GM12878 (cell line): ENCODE measurements at regions of chr7 and their contacts with region 1.

Region 1: DNA sequence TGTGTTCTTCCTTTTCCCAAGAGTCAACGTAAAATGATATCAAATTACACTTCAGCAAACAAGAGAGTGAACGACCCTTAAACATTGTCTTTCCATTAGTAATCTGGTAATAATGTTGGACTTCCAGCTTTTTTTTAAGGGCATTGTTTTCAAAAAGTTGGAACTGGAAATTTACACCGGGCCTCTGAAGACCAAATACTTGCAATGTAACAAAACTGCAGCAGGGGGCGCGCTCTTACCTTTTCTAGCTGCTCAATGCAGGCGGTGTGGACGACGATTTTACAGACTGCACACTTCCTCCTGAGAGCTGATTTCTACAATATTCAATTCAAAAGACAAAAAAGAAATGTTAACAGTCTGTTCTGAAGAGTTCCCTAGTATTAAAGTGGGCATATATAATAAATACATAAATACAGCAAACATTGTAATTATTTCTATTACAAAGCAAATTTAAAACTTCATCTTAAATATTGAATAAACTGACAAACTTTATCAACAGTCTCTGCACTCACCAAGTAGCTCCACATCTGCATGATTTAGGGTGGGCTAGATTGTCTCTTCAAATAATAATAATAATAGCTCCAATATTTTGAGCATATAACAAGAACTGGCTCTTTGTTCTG is 190.4 kb downstream of the DGKI start:
- DNase-seq: peak; percentile 20
- ATAC-seq: peak; percentile 90
- H3K4me3 ChIP-seq: no peak overlapping the region
- H3K27ac ChIP-seq: no peak overlapping the region
- H3K4me1 ChIP-seq: no peaks in the 10 kb centered on the region
- H3K27me3 ChIP-seq: no peaks in the 10 kb centered on the region
- CTCF ChIP-seq: peak; percentile 74 to 86 (median 83)
- EP300 ChIP-seq: no peak
- POLR2A ChIP-seq: no peak
- RAD21 ChIP-seq: peak; percentile 96

Region 2: GRCh38 chr7:137670199-137671071 is 14.1 kb after region 1 on chr7:
- CTCF ChIA-PET with region 1: interaction called, 72 read pairs
- POLR2A ChIA-PET with region 1: interaction called, 23 read pairs
- RAD21 ChIA-PET with region 1: interaction called, 141 read pairs
- SMC1A ChIA-PET with region 1: interaction called, 140 read pairs
- in situ Hi-C with region 1: no loop called
- intact Hi-C with region 1: no loop called
- DNase-seq: peak; percentile 35
- ATAC-seq: peak; percentile 77
- H3K4me3 ChIP-seq: no peak overlapping the region
- H3K27ac ChIP-seq: no peak overlapping the region
- H3K4me1 ChIP-seq: 0 out of 2 replicates have a peak, but pooled peaks cover 2% of the 10 kb centered on the region
- H3K27me3 ChIP-seq: no peaks in the 10 kb centered on the region
- CTCF ChIP-seq: no peak
- EP300 ChIP-seq: no peak
- POLR2A ChIP-seq: no peak
- RAD21 ChIP-seq: peak; percentile 19; the same call in 1 of the 2 replicates

Region 3: DNA sequence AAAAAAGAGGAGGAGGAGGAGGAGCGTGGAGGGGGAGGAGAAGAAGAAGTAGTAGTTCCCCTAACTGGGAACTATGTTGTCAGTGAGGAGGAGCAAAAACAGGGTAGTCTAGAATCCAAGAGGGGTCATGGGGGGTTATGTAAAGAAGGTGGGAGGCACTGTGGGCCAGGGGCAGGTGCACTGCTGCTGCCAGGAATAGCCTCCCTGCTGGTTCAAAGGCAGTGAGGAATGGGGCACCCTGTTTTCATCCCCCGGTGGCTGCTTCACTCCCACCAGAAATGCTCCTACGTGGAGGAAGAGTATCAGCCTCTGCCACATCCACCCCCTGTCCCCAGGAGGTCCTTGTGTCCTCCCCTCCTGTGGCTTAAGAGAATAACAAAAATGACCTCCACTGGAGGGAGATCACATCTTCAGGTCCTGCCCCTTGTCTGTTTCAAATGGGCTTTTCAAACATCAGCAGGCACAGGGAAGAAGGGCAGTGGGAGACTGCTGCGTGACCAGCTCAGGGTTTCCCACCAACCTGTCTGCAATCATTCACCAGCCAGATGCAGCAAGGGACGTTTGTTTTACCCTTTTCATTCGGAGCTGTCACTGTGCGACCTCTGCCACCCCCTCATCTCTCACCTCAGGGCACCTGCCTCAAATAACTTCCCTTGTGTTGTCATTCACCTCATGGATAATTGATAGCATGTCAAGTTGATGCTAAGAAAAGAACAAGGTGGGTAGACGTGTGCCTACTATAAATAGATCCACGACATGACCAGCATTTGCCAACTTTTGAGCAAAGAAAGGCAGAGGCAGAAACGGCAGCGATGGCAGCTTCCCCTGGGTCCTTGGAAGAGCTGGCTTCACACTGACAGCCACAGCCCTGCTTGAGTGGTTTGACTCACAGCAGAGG is 97.9 kb after region 1 on chr7:
- CTCF ChIA-PET with region 1: interaction called, 20 read pairs
- POLR2A ChIA-PET with region 1: interaction called, 3 read pairs
- RAD21 ChIA-PET with region 1: interaction called, 48 read pairs
- SMC1A ChIA-PET with region 1: interaction called, 59 read pairs
- in situ Hi-C with region 1: no loop called
- intact Hi-C with region 1: no loop called
- DNase-seq: peak; percentile 27
- ATAC-seq: peak; percentile 72
- H3K4me3 ChIP-seq: no peak overlapping the region
- H3K27ac ChIP-seq: no peak overlapping the region
- H3K4me1 ChIP-seq: no peaks in the 10 kb centered on the region; the same call in 1 of the 2 replicates
- H3K27me3 ChIP-seq: no peaks in the 10 kb centered on the region; a peak in 1 of 4 replicates
- CTCF ChIP-seq: no peak
- EP300 ChIP-seq: peak; percentile 76 to 92; a peak in 2 of 4 replicates
- POLR2A ChIP-seq: no peak
- RAD21 ChIP-seq: no peak; the same call in 1 of the 2 replicates

Region 4: DNA sequence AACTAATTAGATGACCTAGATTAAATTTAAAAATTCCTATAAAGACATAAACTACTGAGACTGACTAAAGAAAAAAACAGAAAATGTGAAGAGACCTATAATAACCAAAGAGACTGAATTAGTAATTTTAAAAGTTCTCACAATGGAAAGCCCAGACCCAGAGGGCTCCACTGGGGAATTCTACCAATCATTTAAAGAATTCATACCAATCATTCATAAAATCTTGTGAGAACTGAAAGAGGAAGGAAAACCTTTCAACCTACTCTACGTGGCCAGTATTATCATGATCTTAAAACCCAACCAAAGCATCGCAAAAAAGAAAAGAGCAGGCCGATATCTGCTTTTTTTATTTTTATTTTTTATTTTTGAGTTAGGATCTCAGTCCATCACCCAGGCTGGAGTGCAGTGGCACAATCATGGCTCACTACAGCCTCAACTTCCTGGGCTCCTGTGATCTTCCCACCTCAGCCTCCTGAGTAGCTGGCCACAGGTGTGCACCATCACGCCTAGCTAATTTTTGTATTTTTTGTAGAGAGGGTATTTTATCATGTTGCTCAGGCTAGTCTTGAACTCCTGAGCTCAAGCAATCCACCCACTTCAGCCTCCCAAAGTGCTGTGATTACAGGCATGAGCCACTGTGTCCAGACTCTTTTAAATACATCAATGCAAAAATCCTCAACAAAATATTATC is 141.9 kb after region 1 on chr7:
- CTCF ChIA-PET with region 1: interaction called, 21 read pairs
- POLR2A ChIA-PET with region 1: no interaction called
- RAD21 ChIA-PET with region 1: interaction called, 13 read pairs
- SMC1A ChIA-PET with region 1: interaction called, 11 read pairs
- in situ Hi-C with region 1: no loop called
- intact Hi-C with region 1: no loop called
- DNase-seq: peak; percentile 59
- ATAC-seq: peak; percentile 96
- H3K4me3 ChIP-seq: no peak overlapping the region
- H3K27ac ChIP-seq: no peak overlapping the region; the same call in 1 of the 2 replicates
- H3K4me1 ChIP-seq: no peaks in the 10 kb centered on the region
- H3K27me3 ChIP-seq: no peaks in the 10 kb centered on the region
- CTCF ChIP-seq: no peak
- EP300 ChIP-seq: peak; percentile 48 to 84; a peak in 3 of 4 replicates
- POLR2A ChIP-seq: no peak
- RAD21 ChIP-seq: no peak

Region 5: GRCh38 chr7:137839903-137840779 is 183.8 kb after region 1 on chr7:
- CTCF ChIA-PET with region 1: interaction called, 17 read pairs
- POLR2A ChIA-PET with region 1: no interaction called
- RAD21 ChIA-PET with region 1: interaction called, 71 read pairs
- SMC1A ChIA-PET with region 1: interaction called, 120 read pairs
- in situ Hi-C with region 1: no loop called
- intact Hi-C with region 1: no loop called
- DNase-seq: no peak
- ATAC-seq: 0 out of 3 replicates have a peak, but pooled peaks have one; percentile 11
- H3K4me3 ChIP-seq: no peak overlapping the region
- H3K27ac ChIP-seq: no peak overlapping the region
- H3K4me1 ChIP-seq: no peaks in the 10 kb centered on the region
- H3K27me3 ChIP-seq: peaks cover 0 to 2% of the 10 kb centered on the region in 2 experiments; a peak in 2 of 4 replicates
- CTCF ChIP-seq: no peak
- EP300 ChIP-seq: no peak
- POLR2A ChIP-seq: no peak
- RAD21 ChIP-seq: no peak

Region 6: GRCh38 chr7:137890449-137890921 is 234.1 kb after region 1 on chr7:
- CTCF ChIA-PET with region 1: interaction called, 137 read pairs
- POLR2A ChIA-PET with region 1: interaction called, 12 read pairs
- RAD21 ChIA-PET with region 1: interaction called, 71 read pairs
- SMC1A ChIA-PET with region 1: interaction called, 148 read pairs
- in situ Hi-C with region 1: loop called (anchors 5 kb)
- intact Hi-C with region 1: no loop called
- DNase-seq: no peak
- ATAC-seq: peak; percentile 4
- H3K4me3 ChIP-seq: no peak overlapping the region
- H3K27ac ChIP-seq: no peak overlapping the region
- H3K4me1 ChIP-seq: peaks cover 26% of the 10 kb centered on the region
- H3K27me3 ChIP-seq: no peaks in the 10 kb centered on the region
- CTCF ChIP-seq: no peak
- EP300 ChIP-seq: no peak
- POLR2A ChIP-seq: no peak
- RAD21 ChIP-seq: no peak

Region 7: GRCh38 chr7:137928626-137929025 is 272.3 kb after region 1 on chr7:
- CTCF ChIA-PET with region 1: no interaction called
- POLR2A ChIA-PET with region 1: no interaction called
- RAD21 ChIA-PET with region 1: no interaction called
- SMC1A ChIA-PET with region 1: no interaction called
- in situ Hi-C with region 1: no loop called
- intact Hi-C with region 1: no loop called
- DNase-seq: no peak
- ATAC-seq: no peak
- H3K4me3 ChIP-seq: no peak overlapping the region
- H3K27ac ChIP-seq: no peak overlapping the region
- H3K4me1 ChIP-seq: peaks cover 12% of the 10 kb centered on the region
- H3K27me3 ChIP-seq: no peaks in the 10 kb centered on the region
- CTCF ChIP-seq: no peak
- EP300 ChIP-seq: no peak
- POLR2A ChIP-seq: no peak
- RAD21 ChIP-seq: no peak

Region 8: GRCh38 chr7:138008547-138009349 is 352.4 kb after region 1 on chr7:
- CTCF ChIA-PET with region 1: interaction called, 50 read pairs
- POLR2A ChIA-PET with region 1: interaction called, 6 read pairs
- RAD21 ChIA-PET with region 1: interaction called, 28 read pairs
- SMC1A ChIA-PET with region 1: interaction called, 38 read pairs
- in situ Hi-C with region 1: loop called (anchors 5 kb)
- intact Hi-C with region 1: loop called (anchors 1 kb)
- DNase-seq: no peak
- ATAC-seq: peak; percentile 86
- H3K4me3 ChIP-seq: no peak overlapping the region
- H3K27ac ChIP-seq: no peak overlapping the region
- H3K4me1 ChIP-seq: no peaks in the 10 kb centered on the region
- H3K27me3 ChIP-seq: no peaks in the 10 kb centered on the region
- CTCF ChIP-seq: peak; percentile 80 to 84 (median 80)
- EP300 ChIP-seq: no peak; a peak in 1 of 4 replicates
- POLR2A ChIP-seq: no peak
- RAD21 ChIP-seq: peak; percentile 100